ENCODE measurements at regions of chr7 and their contacts with region 1.

Region 1: GRCh38 chr7:46660402-46660980 is 739.4 kb upstream of the IGFBP3 start:
- DNase-seq: no peak
- ATAC-seq: peak; percentile 28
- H3K4me3 ChIP-seq: no peak overlapping the region
- H3K27ac ChIP-seq: no peak overlapping the region
- H3K4me1 ChIP-seq: no peaks in the 10 kb centered on the region
- H3K27me3 ChIP-seq: no peaks in the 10 kb centered on the region
- CTCF ChIP-seq: no peak
- EP300 ChIP-seq: peak in 1 of 2 experiments; percentile 68; a peak in 1 of 4 replicates
- POLR2A ChIP-seq: no peak
- RAD21 ChIP-seq: no peak

Region 2: GRCh38 chr7:46672861-46673260 is 12.4 kb after region 1 on chr7:
- CTCF ChIA-PET with region 1: interaction called, 5 read pairs
- POLR2A ChIA-PET with region 1: interaction called, 16 read pairs
- RAD21 ChIA-PET with region 1: interaction called, 4 read pairs
- SMC1A ChIA-PET with region 1: interaction called, 28 read pairs
- in situ Hi-C with region 1: no loop called
- intact Hi-C with region 1: no loop called
- DNase-seq: no peak
- ATAC-seq: no peak
- H3K4me3 ChIP-seq: no peak overlapping the region
- H3K27ac ChIP-seq: no peak overlapping the region
- H3K4me1 ChIP-seq: no peaks in the 10 kb centered on the region
- H3K27me3 ChIP-seq: no peaks in the 10 kb centered on the region
- CTCF ChIP-seq: no peak
- EP300 ChIP-seq: no peak
- POLR2A ChIP-seq: no peak
- RAD21 ChIP-seq: no peak

Measured in GM12878 (cell line).